ENCODE measurements at regions of chr1 and their contacts with region 1.

Region 1: GRCh38 chr1:161098210-161099068 is at the start of gene KLHDC9:
- DNase-seq: peak; percentile 28 to 68
- ATAC-seq: peak; percentile 70 to 84
- H3K4me3 ChIP-seq: peak within 1 kb of the TSS; percentile 62 to 80 (median 66)
- H3K27ac ChIP-seq: peak within 1 kb of the TSS; percentile 62 to 74 (median 68)
- H3K4me1 ChIP-seq: peaks cover 5 to 19% of the 10 kb centered on the region in 2 donors
- H3K27me3 ChIP-seq: no peaks in the 10 kb centered on the region
- CTCF ChIP-seq: no peak
- POLR2A ChIP-seq: no peak
- total RNA-seq, gene KLHDC9: 0.89 to 2.4 (median 1.3) TPM

Region 2: GRCh38 chr1:160830321-160831153 is 267.9 kb before region 1 on chr1:
- in situ Hi-C with region 1: no loop called
- intact Hi-C with region 1: loop called (anchors 10 kb)
- DNase-seq: no peak
- ATAC-seq: no peak
- H3K4me3 ChIP-seq: no peak overlapping the region
- H3K27ac ChIP-seq: no peak overlapping the region
- H3K4me1 ChIP-seq: no peaks in the 10 kb centered on the region
- H3K27me3 ChIP-seq: no peaks in the 10 kb centered on the region
- CTCF ChIP-seq: peak in 2 of 5 experiments; percentile 13 to 27
- POLR2A ChIP-seq: no peak

Region 3: DNA sequence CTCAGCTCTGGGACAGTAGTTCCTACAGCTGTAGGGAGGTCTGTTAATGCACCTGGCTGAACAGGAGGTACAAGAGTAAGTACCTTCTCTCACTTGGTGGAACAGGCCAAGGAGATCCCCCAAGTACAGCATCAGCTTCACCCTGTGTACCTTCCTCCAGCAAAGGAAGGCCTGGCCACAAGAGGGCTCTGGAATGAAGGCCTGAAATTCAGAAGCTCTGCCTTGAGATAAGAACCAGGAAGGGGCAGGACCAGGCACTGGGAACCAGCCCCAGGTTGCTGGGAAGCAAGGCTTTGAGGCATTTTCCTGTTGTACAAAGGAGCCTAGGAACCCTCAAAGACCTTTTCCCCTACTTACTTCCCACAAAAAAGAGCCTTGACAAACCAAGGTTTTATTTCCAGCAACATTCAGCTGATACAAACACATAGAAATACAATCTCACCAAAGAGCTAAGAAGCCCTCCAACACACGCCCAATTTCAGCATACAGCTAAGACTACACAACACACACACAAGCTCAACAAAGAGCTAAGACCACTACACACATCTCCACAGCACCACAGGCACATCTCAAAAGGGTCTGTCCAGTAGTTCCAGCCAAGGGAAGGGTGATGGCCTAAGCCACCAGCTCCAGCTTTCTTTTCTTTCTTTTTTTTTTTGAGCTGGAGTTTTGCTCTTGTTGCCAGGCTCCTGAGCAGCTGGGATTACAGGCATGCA is 101.0 kb before region 1 on chr1:
- in situ Hi-C with region 1: loop called in 2 of 4 experiments (anchors 10 kb)
- intact Hi-C with region 1: loop called (anchors 1 kb)
- DNase-seq: peak in 1 of 2 donors; percentile 16
- ATAC-seq: peak; percentile 56 to 72
- H3K4me3 ChIP-seq: no peak overlapping the region
- H3K27ac ChIP-seq: peak overlapping the region in 3 of 4 donors; percentile 59 to 70 (median 62)
- H3K4me1 ChIP-seq: no peaks in the 10 kb centered on the region
- H3K27me3 ChIP-seq: no peaks in the 10 kb centered on the region
- CTCF ChIP-seq: peak in 3 of 5 experiments; percentile 47 to 53 (median 51)
- POLR2A ChIP-seq: no peak

Measured in gastrocnemius medialis (tissue), 4 donors.